GM12878 (cell line): ENCODE measurements at regions of chr14 and their contacts with region 1.

Region 1: DNA sequence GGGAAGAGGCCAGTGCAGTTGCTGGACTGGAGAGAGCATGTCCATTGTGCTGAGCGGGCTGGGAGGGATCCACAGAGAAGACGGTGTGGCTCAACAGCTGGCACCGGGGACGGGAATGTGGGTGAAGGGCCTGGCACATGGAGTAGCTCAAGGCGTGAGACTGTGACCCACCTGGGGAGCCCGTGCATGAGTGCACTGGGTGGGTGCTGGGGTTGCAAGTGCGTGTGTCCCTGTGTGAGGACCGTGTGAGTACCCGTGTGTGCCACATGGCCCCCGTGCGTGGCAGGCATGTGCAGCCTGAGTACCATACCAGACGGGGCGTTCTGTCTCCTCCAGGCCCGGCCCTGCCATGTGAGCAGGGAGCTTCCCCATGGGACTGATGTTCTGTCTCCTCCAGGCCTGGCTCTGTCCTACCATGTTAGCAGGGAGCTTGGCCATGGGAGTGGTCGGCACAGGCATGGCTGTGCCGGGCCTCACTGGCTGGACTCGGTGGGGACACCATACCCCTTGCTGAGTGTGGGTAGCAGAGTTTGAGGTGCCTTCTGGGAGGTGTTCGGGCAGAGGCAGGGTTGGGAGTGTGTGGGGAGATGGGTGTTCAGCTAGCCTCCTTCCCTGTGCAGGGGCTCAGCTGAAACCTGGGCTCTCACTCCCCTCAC is 234.4 kb downstream of the TMEM121 start:
- DNase-seq: no peak
- ATAC-seq: no peak; the same call in 2 of the 3 replicates
- H3K4me3 ChIP-seq: no peak overlapping the region
- H3K27ac ChIP-seq: no peak overlapping the region
- H3K4me1 ChIP-seq: no peaks in the 10 kb centered on the region
- H3K27me3 ChIP-seq: no peaks in the 10 kb centered on the region; a peak in 1 of 4 replicates
- CTCF ChIP-seq: no peak
- EP300 ChIP-seq: no peak
- POLR2A ChIP-seq: no peak
- RAD21 ChIP-seq: no peak

Region 2: DNA sequence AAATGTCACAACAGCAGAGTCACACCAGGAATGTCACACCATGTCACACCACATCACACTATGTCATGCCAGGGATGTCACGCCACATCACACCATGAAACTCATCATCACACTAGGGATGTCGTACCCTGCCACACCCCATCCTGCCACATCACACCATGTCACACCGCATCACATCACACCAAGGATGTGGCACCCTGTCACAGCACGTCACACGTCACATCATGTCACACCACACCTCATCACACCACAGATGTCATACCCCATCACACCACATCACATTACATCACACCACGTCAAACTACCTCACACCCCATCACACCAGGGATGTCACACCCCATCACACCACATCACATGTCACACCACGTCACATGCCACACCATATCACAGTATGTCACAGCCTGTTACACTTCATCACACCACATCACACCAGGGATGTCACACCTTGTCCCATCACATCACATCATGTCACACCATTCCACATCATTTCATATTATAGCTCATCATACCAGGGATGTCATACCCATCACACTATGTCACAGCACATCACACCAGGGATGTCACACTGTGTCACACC is 143.5 kb before region 1 on chr14:
- CTCF ChIA-PET with region 1: no interaction called
- POLR2A ChIA-PET with region 1: no interaction called
- RAD21 ChIA-PET with region 1: no interaction called
- SMC1A ChIA-PET with region 1: no interaction called
- in situ Hi-C with region 1: loop called (anchors 5 kb)
- intact Hi-C with region 1: no loop called
- DNase-seq: peak; percentile 13
- ATAC-seq: no peak
- H3K4me3 ChIP-seq: no peak overlapping the region
- H3K27ac ChIP-seq: no peak overlapping the region
- H3K4me1 ChIP-seq: no peaks in the 10 kb centered on the region; the same call in 1 of the 2 replicates
- H3K27me3 ChIP-seq: no peaks in the 10 kb centered on the region
- CTCF ChIP-seq: no peak
- EP300 ChIP-seq: no peak
- POLR2A ChIP-seq: no peak
- RAD21 ChIP-seq: no peak